Activated B cell treated with CpG ODN at 0.5 μM for 24 hours (primary cell): ENCODE measurements at regions of chr14 and their contacts with region 1.

Region 1: DNA sequence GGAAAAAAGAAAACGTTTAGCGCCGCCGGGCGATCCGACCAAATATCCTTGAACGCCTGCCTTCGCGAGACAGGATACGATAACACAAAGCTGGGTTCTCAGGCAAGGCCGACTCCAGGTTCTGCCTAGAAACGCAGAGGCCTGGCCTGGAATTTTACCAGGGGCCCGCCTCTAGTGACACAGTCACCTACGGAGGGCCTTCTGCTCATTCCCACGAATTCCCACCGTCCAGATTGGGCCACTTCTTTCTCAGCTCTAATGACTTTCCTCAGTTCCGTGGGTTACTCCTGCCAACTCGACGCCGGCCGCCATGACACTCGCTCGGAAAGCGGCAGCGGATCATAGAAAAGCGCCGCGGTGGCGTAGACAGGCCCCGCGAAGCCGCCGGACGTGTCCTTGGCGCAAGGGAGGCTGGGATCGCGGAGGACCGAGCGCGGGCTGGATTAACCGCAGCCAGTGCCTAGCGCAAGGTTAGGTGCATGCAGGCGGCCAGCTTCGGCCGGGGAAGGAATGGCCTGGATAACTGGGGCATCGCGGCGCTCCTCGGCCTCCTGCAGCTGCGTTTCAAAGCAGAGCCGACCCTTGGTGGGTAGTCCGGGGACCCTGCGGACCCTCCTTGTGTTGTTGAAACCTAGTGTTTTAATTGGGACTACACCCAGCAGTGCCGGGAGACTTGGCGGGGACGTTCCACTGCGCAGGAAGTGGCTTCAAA is at the start of gene TRIP11:
- DNase-seq: peak; percentile 94
- ATAC-seq: peak; percentile 96
- H3K4me3 Mint-ChIP-seq: peak within 1 kb of the TSS; percentile 98
- H3K27ac Mint-ChIP-seq: peak within 1 kb of the TSS; percentile 95
- H3K4me1 Mint-ChIP-seq: peaks cover 40% of the 10 kb centered on the region
- H3K27me3 Mint-ChIP-seq: no peaks in the 10 kb centered on the region
- CTCF ChIP-seq: no peak
- total RNA-seq, gene TRIP11: 46.2 and 59.5 TPM in 2 replicates

Region 2: DNA sequence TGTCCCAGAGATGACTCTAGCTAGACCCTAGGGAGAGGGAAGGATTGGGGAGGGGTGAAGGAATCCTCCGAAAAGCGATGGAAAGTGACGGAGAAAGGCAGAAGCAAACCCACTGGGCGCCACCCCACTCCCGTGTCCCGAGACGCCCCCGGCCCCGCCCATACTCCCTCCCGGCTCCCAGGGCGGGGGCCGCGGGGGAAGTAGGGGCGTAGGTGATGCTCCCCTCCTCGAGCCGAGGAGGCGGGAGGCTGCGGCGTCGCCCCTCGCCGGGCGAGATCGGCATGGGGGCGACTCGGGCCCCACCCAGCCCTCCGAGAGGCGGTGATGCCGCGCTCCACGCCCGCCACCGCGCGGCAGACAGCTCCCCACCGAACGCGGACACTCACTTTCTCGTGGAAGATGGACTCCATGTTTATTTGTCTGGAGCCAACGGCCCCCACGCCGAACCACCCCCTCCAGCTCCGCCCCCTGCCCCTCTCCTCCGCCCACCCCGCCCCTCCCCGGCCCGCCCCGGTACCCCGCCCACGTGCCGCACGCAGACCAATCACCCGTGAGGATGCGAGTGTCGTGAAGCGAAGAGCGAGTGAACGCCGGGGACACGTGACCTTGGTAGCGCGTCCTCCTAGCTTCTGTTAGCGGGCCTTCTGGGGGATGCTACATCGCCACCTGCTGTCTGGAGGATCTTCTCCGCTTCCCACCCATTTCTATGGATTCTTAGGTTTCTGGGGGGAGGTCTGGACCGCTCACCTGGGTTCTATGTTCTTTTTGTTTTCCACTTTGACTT is 66.5 kb after region 1 on chr14 and contains the start of gene ATXN3:
- CTCF ChIA-PET with region 1: interaction called, 6 read pairs
- POLR2A ChIA-PET with region 1: interaction called, 40 read pairs
- intact Hi-C with region 1: loop called (anchors 1 kb)
- DNase-seq: peak; percentile 81
- ATAC-seq: peak; percentile 91
- H3K4me3 Mint-ChIP-seq: peak within 1 kb of the TSS; percentile 100
- H3K27ac Mint-ChIP-seq: peak within 1 kb of the TSS; percentile 92
- H3K4me1 Mint-ChIP-seq: peaks cover 46% of the 10 kb centered on the region
- H3K27me3 Mint-ChIP-seq: no peaks in the 10 kb centered on the region
- CTCF ChIP-seq: no peak
- total RNA-seq, gene ATXN3: 23.8 and 29.3 TPM in 2 replicates

Region 3: GRCh38 chr14:92121670-92122350 is 81.9 kb after region 1 on chr14 and contains the starts of genes CPSF2 and NDUFB1:
- CTCF ChIA-PET with region 1: no interaction called
- POLR2A ChIA-PET with region 1: interaction called, 39 read pairs
- intact Hi-C with region 1: loop called (anchors 1 kb)
- DNase-seq: peak; percentile 78
- ATAC-seq: peak; percentile 92
- H3K4me3 Mint-ChIP-seq: peak within 1 kb of the TSS; percentile 100
- H3K27ac Mint-ChIP-seq: peak within 1 kb of the TSS; percentile 100
- H3K4me1 Mint-ChIP-seq: peaks cover 35% of the 10 kb centered on the region
- H3K27me3 Mint-ChIP-seq: no peaks in the 10 kb centered on the region
- CTCF ChIP-seq: no peak
- total RNA-seq, gene CPSF2: 46.9 and 53.2 TPM in 2 replicates
- total RNA-seq, gene NDUFB1: 88.2 and 94.2 TPM in 2 replicates

Region 4: DNA sequence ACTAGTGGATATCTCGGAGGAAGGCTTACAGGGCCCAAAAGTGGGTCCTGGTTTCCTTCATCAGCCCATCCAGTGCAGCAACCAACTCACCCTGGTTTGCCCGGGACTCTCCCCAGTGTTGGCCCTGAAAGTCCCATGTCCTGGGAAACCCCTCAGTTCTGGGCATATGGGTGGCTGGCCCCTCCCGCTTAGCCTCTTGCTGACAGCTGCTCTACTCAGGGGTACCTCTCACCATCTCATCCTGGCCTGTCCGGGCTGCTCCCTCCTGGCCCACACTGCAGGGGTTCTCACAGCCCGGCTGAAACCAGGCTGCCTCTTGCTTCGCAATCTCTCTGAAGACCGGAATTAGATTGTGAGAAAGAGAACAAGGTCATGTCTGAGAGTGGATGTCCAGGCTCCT is 234.2 kb after region 1 on chr14:
- CTCF ChIA-PET with region 1: no interaction called
- POLR2A ChIA-PET with region 1: no interaction called
- intact Hi-C with region 1: no loop called
- DNase-seq: no peak
- ATAC-seq: no peak
- H3K4me3 Mint-ChIP-seq: no peak overlapping the region
- H3K27ac Mint-ChIP-seq: no peak overlapping the region
- H3K4me1 Mint-ChIP-seq: no peaks in the 10 kb centered on the region
- H3K27me3 Mint-ChIP-seq: peaks cover 28% of the 10 kb centered on the region
- CTCF ChIP-seq: no peak

Region 5: GRCh38 chr14:92287987-92288386 is 248.1 kb after region 1 on chr14:
- CTCF ChIA-PET with region 1: no interaction called
- POLR2A ChIA-PET with region 1: no interaction called
- intact Hi-C with region 1: no loop called
- DNase-seq: no peak
- ATAC-seq: no peak
- H3K4me3 Mint-ChIP-seq: no peak overlapping the region
- H3K27ac Mint-ChIP-seq: no peak overlapping the region
- H3K4me1 Mint-ChIP-seq: no peaks in the 10 kb centered on the region
- H3K27me3 Mint-ChIP-seq: peaks cover 29% of the 10 kb centered on the region
- CTCF ChIP-seq: no peak

Region 6: GRCh38 chr14:92456215-92457015 is 416.5 kb after region 1 on chr14:
- CTCF ChIA-PET with region 1: no interaction called
- POLR2A ChIA-PET with region 1: no interaction called
- intact Hi-C with region 1: loop called (anchors 2 kb)
- DNase-seq: no peak
- ATAC-seq: peak; percentile 77
- H3K4me3 Mint-ChIP-seq: no peak overlapping the region
- H3K27ac Mint-ChIP-seq: no peak overlapping the region
- H3K4me1 Mint-ChIP-seq: peaks cover 6% of the 10 kb centered on the region
- H3K27me3 Mint-ChIP-seq: peaks cover 5% of the 10 kb centered on the region
- CTCF ChIP-seq: no peak

Region 7: DNA sequence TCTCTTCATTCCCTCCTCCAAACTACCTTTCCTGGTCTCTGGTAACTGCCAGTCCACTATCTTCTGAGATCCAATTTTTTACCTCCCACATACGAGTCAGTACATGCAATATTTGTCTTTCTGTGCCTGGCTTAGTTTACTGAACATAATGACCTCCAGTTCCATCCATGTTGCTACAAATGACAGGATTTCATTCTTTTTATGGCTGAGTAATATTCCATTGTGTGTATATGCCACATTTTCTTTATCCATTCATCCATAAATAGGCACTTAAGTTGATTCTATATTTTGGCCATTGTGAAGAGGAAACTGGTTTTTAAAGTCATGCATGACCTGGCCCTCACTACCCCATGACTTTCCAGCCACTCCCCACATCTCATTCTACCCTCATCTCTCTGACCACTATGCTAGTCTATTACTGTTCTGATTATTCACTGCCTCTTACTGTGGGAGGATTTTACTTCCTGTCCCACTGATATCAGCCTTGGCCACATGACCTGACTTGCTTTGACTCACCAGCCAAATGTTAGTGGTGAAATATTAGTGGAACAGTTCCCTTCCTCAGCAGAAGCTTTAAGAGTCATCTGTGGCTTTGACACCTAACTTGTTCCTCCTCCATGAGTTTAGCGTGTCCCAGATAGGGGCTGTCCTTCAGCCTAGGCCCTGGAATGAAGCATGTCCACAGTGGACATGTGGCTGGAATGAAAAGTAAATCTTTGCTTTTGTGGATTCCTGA is 806.5 kb after region 1 on chr14:
- CTCF ChIA-PET with region 1: no interaction called
- POLR2A ChIA-PET with region 1: interaction called, 10 read pairs
- intact Hi-C with region 1: no loop called
- DNase-seq: no peak
- ATAC-seq: peak; percentile 51
- H3K4me3 Mint-ChIP-seq: peak overlapping the region; percentile 3
- H3K27ac Mint-ChIP-seq: peak overlapping the region; percentile 46
- H3K4me1 Mint-ChIP-seq: peaks cover 40% of the 10 kb centered on the region
- H3K27me3 Mint-ChIP-seq: no peaks in the 10 kb centered on the region
- CTCF ChIP-seq: no peak